Sigmoid colon (tissue), 7 donors: ENCODE measurements at regions of chr16 and their contacts with region 1.

Region 1: GRCh38 chr16:89217388-89218191 is at the start of gene ZNF778:
- DNase-seq: peak; percentile 91
- H3K4me3 ChIP-seq: peak within 1 kb of the TSS; percentile 69 to 99 (median 86)
- H3K27ac ChIP-seq: peak within 1 kb of the TSS; percentile 96 to 98 (median 96)
- H3K4me1 ChIP-seq: peaks cover 0 to 33% (median 31%) of the 10 kb centered on the region in 4 donors
- H3K27me3 ChIP-seq: no peaks in the 10 kb centered on the region
- CTCF ChIP-seq: no peak
- EP300 ChIP-seq: no peak
- POLR2A ChIP-seq: peak; percentile 32 to 66
- total RNA-seq, gene ZNF778: 6.4 to 21.8 (median 12.6) TPM

Region 2: DNA sequence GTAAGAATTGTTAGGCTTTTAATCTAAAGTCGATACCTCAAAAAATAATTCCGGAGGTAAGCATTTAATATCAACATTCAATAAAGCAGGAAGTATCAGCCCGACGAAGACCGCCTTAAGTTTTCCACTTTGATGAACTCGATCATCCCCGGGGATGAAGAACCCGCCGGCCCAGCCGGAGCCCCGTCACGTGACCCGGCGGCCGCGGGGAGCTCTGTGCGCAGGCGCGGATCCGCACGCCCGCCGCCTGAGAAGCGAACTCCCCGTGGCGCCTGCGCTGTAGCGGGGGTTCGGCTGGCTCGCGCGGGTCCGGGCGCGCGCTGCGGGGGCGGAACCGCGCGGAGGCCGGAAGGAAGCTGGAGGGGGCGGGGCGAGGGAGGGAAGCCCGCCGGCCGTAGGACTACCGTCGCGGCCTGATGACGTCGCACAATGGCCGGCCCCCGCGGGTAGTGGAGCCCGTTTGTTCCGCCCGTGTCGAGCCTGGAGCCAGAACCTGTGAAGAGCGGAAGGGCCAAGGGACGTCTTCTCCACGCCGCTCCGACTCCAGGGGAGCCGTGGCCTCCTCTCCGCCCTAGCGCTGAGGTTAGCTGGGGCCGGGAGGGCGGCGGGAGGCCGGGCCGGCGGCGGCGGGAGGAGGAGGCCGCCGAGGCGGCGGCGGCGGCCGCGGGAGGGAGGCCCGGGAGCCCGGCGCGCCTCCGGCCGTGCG is 647.5 kb before region 1 on chr16 and contains the start of gene ZC3H18:
- intact Hi-C with region 1: loop called (anchors 2 kb)
- DNase-seq: peak; percentile 98
- H3K4me3 ChIP-seq: peak within 1 kb of the TSS; percentile 71 to 93 (median 78)
- H3K27ac ChIP-seq: peak within 1 kb of the TSS; percentile 83 to 90 (median 86)
- H3K4me1 ChIP-seq: peaks cover 0 to 29% (median 19%) of the 10 kb centered on the region in 4 donors
- H3K27me3 ChIP-seq: no peaks in the 10 kb centered on the region
- CTCF ChIP-seq: no peak
- EP300 ChIP-seq: no peak
- POLR2A ChIP-seq: peak in 1 of 2 donors; percentile 21
- total RNA-seq, gene ZC3H18: 15.5 to 22.1 (median 16.6) TPM

Region 3: GRCh38 chr16:88811769-88812512 is 405.6 kb before region 1 on chr16 and contains the start of gene APRT:
- intact Hi-C with region 1: loop called (anchors 2 kb)
- DNase-seq: peak; percentile 97
- H3K4me3 ChIP-seq: peak within 1 kb of the TSS; percentile 63 to 88 (median 76)
- H3K27ac ChIP-seq: peak within 1 kb of the TSS; percentile 91 to 96 (median 96)
- H3K4me1 ChIP-seq: peaks cover 0 to 36% (median 28%) of the 10 kb centered on the region in 4 donors
- H3K27me3 ChIP-seq: no peaks in the 10 kb centered on the region
- CTCF ChIP-seq: peak in 2 of 4 experiments; percentile 9 to 24
- EP300 ChIP-seq: peak in 1 of 4 donors; percentile 46
- POLR2A ChIP-seq: no peak
- total RNA-seq, gene APRT: 56.6 to 78.3 (median 62.5) TPM

Region 4: DNA sequence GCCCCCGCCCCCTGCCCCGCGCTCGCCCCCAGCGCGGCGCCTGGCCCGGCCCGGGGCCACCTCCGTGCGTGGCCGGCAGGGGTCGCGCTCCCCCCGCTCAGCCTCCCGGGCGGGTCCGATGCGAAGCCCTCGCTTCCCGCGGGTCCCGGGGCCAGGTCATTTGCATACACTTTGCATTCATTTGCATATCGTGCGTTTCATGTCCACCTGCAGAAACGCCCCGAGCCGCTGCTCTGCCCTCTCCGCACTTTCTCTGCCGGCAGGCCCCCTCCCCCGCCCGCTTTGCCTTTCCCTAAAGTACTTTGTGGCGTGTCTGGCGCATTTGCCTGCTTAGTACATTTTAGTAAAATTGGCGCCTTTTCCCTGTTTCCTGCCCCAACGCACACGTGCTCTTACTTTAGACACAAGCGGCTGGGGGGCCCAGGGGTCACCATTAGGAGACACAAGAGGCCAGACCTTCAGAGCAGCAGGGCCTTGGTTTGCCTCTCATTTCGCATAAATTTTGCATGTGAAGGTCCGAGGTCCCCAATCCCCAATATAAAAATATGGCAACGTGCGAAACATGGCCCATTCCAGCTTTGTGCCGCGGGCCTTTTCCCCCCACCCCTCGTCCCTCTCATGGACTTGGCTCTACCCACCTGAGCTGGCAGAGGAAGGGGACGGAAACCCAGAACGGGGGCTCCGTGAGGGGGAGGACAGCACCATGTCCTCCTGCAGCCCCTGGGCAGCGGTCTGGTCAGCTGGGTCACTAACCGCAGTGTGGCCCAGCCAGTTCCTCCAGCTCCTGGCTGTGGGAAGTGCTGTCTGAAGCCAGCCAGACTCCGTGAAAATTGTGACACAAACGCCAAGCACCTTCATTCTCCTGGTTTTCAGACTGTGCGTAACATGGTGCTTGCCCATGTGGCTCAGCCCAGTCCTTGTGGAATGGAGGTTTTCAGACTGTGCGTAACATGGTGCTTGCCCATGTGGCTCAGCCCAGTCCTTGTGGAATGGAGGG is 275.4 kb before region 1 on chr16:
- intact Hi-C with region 1: loop called (anchors 1 kb)
- DNase-seq: no peak
- H3K4me3 ChIP-seq: peak overlapping the region in 3 of 4 donors; percentile 47 to 56 (median 54)
- H3K27ac ChIP-seq: no peak overlapping the region
- H3K4me1 ChIP-seq: peaks cover 0 to 35% (median 26%) of the 10 kb centered on the region in 4 donors
- H3K27me3 ChIP-seq: peaks cover 24 to 88% (median 52%) of the 10 kb centered on the region in 3 donors
- CTCF ChIP-seq: peak in 3 of 4 experiments; percentile 28 to 76 (median 31)
- EP300 ChIP-seq: no peak
- POLR2A ChIP-seq: no peak

Region 5: DNA sequence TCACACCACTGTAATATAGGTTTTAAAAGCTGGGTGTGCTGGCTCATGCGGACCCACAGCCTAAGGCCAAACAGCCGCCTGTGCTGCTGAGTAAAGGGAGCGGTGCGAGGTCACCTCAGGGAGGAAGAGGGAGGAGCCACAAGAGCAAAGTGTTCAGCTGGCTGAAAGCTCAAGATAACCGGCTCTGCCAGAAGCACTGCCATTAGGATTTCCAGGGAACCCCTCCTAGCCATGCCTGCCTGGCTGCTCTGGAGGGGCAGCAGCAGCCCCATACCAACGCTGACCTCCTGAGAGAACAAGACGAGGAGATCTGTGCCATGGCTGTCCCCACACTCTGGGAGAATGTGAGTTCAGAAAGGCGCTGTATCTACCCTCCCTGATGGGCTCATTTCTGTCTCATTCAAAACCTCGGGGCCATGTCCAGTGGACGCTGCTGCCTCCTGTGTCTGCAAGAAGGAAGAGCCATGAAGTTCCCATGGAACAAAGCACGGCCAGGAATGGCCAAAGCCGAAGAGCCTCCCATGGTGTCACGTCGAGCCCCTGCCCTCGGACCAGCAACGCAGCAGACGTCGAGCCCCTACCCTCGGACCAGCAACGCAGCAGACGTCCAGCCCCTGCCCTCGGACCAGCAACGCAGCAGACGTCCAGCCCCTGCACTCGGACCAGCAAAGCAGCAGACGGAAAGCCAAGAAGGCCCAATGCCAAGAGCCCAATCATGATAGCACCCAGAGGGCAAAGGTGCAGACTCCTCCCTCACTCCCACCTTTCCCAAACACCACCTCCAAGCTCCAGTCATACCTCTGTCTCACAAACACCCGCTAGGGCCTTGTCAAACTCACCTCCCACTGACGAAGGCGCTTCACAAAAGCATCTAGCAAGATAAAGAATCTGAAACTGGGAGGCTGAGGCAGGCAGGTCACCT is 165.8 kb after region 1 on chr16:
- intact Hi-C with region 1: no loop called
- DNase-seq: peak; percentile 59
- H3K4me3 ChIP-seq: no peak overlapping the region
- H3K27ac ChIP-seq: no peak overlapping the region
- H3K4me1 ChIP-seq: peaks cover 0 to 71% (median 63%) of the 10 kb centered on the region in 4 donors
- H3K27me3 ChIP-seq: no peaks in the 10 kb centered on the region
- CTCF ChIP-seq: no peak
- EP300 ChIP-seq: no peak
- POLR2A ChIP-seq: no peak